Natural killer cell (primary cell): ENCODE measurements at regions of chr7 and their contacts with region 1.

Region 1: GRCh38 chr7:48154792-48155413 is 16.4 kb upstream of the ABCA13 start:
- DNase-seq: peak; percentile 21 to 56
- ATAC-seq: peak; percentile 56 to 78 (median 58)
- H3K4me3 ChIP-seq: no peak overlapping the region
- H3K4me3 Mint-ChIP-seq: no peak overlapping the region
- H3K27ac ChIP-seq: no peak overlapping the region
- H3K27ac Mint-ChIP-seq: no peak overlapping the region
- H3K4me1 ChIP-seq: no peaks in the 10 kb centered on the region
- H3K4me1 Mint-ChIP-seq: no peaks in the 10 kb centered on the region
- H3K27me3 ChIP-seq: no peaks in the 10 kb centered on the region
- H3K27me3 Mint-ChIP-seq: peaks cover 16 to 22% of the 10 kb centered on the region in 2 donors
- CTCF ChIP-seq: peak; percentile 69

Region 2: GRCh38 chr7:47945261-47946001 is 209.5 kb before region 1 on chr7:
- intact Hi-C with region 1: loop called (anchors 1 kb)
- DNase-seq: peak; percentile 65 to 81
- ATAC-seq: peak in 2 of 3 donors; percentile 29 to 66
- H3K4me3 ChIP-seq: no peak overlapping the region
- H3K4me3 Mint-ChIP-seq: no peak overlapping the region
- H3K27ac ChIP-seq: no peak overlapping the region
- H3K27ac Mint-ChIP-seq: no peak overlapping the region
- H3K4me1 ChIP-seq: no peaks in the 10 kb centered on the region
- H3K4me1 Mint-ChIP-seq: no peaks in the 10 kb centered on the region
- H3K27me3 ChIP-seq: no peaks in the 10 kb centered on the region
- H3K27me3 Mint-ChIP-seq: no peaks in the 10 kb centered on the region
- CTCF ChIP-seq: peak; percentile 89

Region 3: DNA sequence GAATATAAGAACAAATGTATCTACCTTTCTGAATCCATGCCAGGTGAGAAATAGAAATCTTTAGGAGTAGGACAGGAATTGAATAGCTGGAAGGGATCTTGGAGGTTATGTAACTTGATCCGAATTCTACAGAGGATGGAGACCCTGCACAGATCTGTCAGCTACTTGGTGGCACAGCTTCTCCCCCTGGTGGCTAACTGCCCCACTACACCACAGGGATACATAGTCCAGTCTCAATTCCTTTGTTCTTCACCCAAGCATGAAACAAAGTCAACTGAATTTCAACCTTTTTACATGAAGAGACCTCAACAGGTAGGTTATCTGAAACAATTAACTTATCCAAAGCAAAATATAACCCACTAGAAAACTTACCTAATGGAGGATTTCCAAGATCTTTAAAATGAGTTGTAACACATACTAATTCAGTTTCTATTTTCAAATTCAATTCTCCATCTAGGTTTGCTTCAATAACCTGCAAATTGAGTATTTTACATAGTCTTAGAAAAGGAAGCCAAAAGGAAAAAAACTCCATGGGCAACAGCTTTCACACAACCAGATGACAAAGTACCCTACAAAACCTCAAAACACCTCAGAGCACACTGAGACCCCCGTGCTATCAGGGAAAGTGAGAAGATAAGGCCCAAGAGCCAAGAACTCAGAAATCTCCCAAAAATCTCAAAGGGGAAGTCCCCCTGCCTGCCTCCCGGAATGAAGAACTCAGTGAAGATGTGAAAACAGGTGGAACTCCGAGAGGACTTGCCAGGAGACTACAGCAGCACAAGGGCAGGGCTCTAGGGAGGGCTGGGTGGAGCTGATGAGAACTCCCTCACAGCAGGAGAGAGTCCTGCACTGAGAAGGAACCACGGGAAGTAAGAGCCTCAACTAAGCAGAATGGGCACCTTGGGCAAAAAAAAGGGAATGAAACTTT is 185.8 kb before region 1 on chr7:
- intact Hi-C with region 1: no loop called
- DNase-seq: peak; percentile 29 to 73
- ATAC-seq: peak; percentile 58 to 81 (median 79)
- H3K4me3 ChIP-seq: no peak overlapping the region
- H3K4me3 Mint-ChIP-seq: no peak overlapping the region
- H3K27ac ChIP-seq: no peak overlapping the region
- H3K27ac Mint-ChIP-seq: peak overlapping the region; percentile 2 to 34
- H3K4me1 ChIP-seq: peaks cover 2% of the 10 kb centered on the region
- H3K4me1 Mint-ChIP-seq: peaks cover 26 to 42% of the 10 kb centered on the region in 2 donors
- H3K27me3 ChIP-seq: no peaks in the 10 kb centered on the region
- H3K27me3 Mint-ChIP-seq: no peaks in the 10 kb centered on the region
- CTCF ChIP-seq: peak; percentile 84